ENCODE measurements at regions of chr5 and their contacts with region 1.

Region 1: GRCh38 chr5:133944263-133945185 is 23.9 kb downstream of the C5orf15 start:
- DNase-seq: peak; percentile 53
- H3K4me3 ChIP-seq: no peak overlapping the region
- H3K27ac ChIP-seq: no peak overlapping the region
- H3K4me1 ChIP-seq: no peaks in the 10 kb centered on the region
- H3K27me3 ChIP-seq: no peaks in the 10 kb centered on the region
- CTCF ChIP-seq: peak; percentile 79
- POLR2A ChIP-seq: no peak

Region 2: DNA sequence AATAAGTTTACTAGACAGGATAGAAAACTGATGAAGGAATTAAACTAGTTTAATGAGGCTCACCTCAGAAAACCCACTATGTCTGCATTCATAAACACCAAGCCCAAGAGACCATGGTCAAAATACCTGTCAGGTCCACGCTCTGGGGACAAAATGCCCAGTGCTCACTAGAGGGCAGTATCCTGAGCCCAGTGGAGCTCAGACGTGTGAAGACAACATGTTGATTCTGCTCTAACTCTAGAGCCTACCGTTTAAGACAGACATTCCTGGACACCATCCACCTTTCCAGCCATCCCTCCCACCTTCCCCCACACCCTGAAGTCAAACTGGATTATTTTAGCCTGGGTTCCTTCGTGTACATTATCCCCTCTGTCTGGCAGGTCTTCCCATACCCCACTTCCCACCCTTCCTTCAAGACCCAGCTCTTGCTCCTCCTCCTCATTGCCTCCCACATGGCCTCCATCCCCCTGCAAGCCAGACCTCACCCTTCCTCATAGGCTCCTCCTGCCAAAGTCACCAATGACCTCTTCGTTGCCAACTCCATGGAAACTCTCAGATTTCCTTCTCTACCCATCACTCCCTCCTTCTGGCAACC is 189.9 kb before region 1 on chr5:
- CTCF ChIA-PET with region 1: no interaction called
- POLR2A ChIA-PET with region 1: no interaction called
- dilution Hi-C with region 1: no loop called
- intact Hi-C with region 1: loop called (anchors 1 kb)
- DNase-seq: peak; percentile 21
- H3K4me3 ChIP-seq: no peak overlapping the region
- H3K27ac ChIP-seq: no peak overlapping the region
- H3K4me1 ChIP-seq: peaks cover 9% of the 10 kb centered on the region
- H3K27me3 ChIP-seq: peaks cover 0 to 5% of the 10 kb centered on the region in 2 experiments
- CTCF ChIP-seq: peak; percentile 40 to 47
- POLR2A ChIP-seq: no peak

Region 3: DNA sequence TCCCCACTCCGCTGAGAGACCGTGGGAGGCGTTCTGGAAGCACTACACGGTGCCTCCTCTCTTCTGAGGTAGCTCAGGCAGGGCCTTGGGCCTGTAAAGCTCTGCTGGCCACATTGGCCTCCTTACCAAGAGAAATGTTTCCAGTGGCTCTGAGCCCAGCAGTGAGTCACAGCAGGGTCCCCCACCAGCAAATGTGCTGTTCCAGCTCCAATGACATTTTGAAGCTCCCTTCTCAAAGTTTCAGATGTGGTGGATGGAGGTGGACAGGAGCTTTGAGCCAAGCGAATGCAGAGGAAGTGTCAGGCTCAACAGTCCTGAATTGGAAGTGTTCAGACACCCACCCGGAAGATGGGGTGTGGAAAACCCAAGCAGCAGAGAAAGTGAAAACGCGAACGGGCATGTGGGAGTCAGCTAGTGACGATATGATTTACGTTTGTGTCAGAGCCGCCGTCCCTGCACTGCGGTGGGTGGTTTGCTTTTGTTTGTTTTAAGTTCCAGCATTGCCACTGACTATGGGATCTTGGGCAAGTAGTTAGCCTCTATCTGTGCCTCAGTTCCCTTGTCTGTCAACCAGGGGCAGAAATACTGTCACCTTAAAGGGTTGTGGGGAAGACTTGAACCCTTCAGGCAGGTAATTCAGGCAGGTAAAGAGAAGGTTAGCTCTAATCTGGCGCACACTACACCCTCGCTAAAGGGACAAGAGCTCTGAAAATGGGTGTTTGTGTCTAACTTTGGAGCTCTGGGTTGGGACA is 14.3 kb before region 1 on chr5:
- CTCF ChIA-PET with region 1: no interaction called
- POLR2A ChIA-PET with region 1: no interaction called
- dilution Hi-C with region 1: no loop called
- intact Hi-C with region 1: no loop called
- DNase-seq: no peak
- H3K4me3 ChIP-seq: no peak overlapping the region
- H3K27ac ChIP-seq: no peak overlapping the region
- H3K4me1 ChIP-seq: no peaks in the 10 kb centered on the region
- H3K27me3 ChIP-seq: no peaks in the 10 kb centered on the region
- CTCF ChIP-seq: no peak
- POLR2A ChIP-seq: no peak

Region 4: GRCh38 chr5:133968049-133968980 is 23.8 kb after region 1 on chr5 and contains the start of gene C5orf15:
- CTCF ChIA-PET with region 1: no interaction called
- POLR2A ChIA-PET with region 1: no interaction called
- dilution Hi-C with region 1: no loop called
- intact Hi-C with region 1: no loop called
- DNase-seq: peak; percentile 97
- H3K4me3 ChIP-seq: peak within 1 kb of the TSS; percentile 65 to 86 (median 74)
- H3K27ac ChIP-seq: peak within 1 kb of the TSS; percentile 45
- H3K4me1 ChIP-seq: peaks cover 7% of the 10 kb centered on the region
- H3K27me3 ChIP-seq: no peaks in the 10 kb centered on the region
- CTCF ChIP-seq: peak in 1 of 2 donors; percentile 9
- POLR2A ChIP-seq: peak; percentile 78
- total RNA-seq, gene C5orf15: 24.8 and 25.3 TPM in 2 replicates

Measured in endothelial cell of umbilical vein (primary cell).